Right lobe of liver (tissue), 6 donors: ENCODE measurements at regions of chr11 and their contacts with region 1.

Region 1: DNA sequence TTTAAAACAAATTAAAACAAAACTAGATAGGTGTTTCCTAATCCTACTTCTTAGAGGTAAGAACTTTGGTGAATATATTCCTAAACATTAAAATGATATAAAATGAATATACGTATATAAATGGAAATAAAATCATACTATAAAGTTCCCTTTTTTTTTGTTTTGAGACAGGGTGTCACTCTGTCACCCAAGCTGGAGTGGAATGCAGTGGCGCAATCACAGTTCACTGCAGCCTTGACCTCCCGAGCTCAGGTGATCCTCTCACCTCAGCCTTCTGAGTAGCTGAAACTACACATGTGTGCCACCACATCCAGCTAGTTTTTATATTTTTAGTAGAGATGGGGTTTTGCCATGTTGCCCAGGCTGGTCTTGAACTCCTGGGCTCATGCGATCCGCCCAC is 44.9 kb downstream of the NPAT start:
- DNase-seq: peak; percentile 59 to 75 (median 64)
- ATAC-seq: peak; percentile 83 to 97 (median 92)
- H3K4me3 ChIP-seq: no peak overlapping the region
- H3K27ac ChIP-seq: peak overlapping the region in 2 of 3 donors; percentile 30 to 34
- H3K4me1 ChIP-seq: peaks cover 0 to 10% (median 3%) of the 10 kb centered on the region in 4 donors
- H3K27me3 ChIP-seq: no peaks in the 10 kb centered on the region
- CTCF ChIP-seq: no peak
- POLR2A ChIP-seq: no peak

Region 2: DNA sequence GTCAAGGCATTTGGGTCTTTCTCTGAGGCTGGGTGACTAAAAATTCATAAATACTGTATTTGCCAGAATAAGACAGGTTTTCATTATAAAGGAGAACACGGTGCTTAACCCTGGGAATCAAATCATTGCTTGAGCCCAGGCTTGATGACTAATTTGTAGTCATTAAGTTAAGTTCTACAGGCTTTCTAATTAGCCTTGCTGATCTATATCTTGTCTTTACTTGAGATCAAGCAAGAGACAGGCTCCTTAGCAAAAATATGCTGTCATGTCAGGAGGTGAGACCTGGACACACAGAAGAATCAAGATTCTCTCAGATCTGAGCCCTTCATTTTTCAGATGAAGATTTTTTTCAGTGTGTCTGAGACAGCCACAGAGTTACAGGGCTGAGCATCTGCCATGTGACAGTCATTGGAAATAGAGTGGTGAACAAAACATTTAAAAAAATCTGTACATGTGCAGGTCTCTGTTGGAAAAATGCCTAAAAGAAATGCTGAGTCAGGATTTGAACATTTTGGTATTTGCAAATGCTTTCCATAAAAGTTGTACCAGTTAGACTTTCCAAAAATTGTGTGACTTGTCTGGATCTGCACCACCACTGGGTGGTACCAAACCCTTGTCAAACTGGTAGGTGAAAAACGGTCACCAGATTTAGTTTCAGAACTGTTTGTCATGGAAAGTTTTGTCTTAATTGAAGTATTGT is 41.6 kb before region 1 on chr11:
- intact Hi-C with region 1: loop called in 1 of 2 experiments (anchors 10 kb)
- DNase-seq: no peak
- ATAC-seq: peak; percentile 19 to 49 (median 30)
- H3K4me3 ChIP-seq: no peak overlapping the region
- H3K27ac ChIP-seq: no peak overlapping the region
- H3K4me1 ChIP-seq: peaks cover 0 to 5% (median 0%) of the 10 kb centered on the region in 4 donors
- H3K27me3 ChIP-seq: no peaks in the 10 kb centered on the region
- CTCF ChIP-seq: peak in 3 of 4 donors; percentile 5 to 24 (median 20)
- POLR2A ChIP-seq: no peak